Esophagus muscularis mucosa (tissue), 4 donors: ENCODE measurements at regions of chr6 and their contacts with region 1.

Region 1: DNA sequence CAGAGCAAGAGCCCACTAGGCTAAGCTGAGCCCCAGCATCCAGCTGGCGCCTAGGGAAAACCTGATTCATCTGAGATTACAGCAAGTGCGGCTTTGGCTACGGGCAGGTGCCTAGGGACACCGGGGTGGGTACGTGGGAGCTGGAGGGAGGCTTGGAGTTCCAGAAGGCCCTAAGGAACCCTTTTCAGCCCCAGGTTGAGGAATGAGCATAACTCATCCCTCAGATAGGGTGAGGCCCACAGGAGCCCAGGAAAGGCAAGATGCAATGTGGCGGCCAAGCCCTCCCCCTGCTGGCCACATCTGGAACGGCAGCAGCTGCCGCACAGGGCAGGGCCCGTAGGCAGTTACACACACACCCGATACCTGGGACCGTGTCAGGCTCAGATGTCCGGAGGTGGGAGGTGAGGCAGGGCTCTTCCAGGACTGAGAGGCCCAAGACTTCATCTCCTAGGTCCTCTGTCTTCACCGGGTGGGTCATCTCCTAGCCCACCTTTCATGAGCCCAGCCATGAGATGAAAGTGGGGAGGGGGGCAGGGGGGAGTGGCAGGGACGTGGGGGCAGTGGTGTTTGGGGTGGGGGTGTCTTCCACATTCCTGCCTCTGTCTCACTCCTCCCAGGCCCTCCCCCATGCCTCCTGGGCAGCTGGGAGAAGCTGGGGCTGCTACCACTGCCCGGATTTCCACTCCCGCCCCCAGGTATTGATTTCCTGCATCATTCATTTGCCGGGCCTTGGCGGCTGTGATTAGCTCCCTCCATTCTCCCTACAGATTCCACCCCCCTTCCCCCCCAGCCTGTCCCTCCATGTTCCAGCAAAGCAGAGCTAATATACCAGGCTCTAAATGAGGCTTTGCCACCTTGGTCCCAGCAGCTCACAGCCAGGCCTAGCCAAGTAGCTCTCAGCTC is 5.5 kb downstream of the MDGA1 start:
- DNase-seq: peak; percentile 94
- H3K4me3 ChIP-seq: no peak overlapping the region
- H3K27ac ChIP-seq: no peak overlapping the region
- H3K4me1 ChIP-seq: peaks cover 11 to 33% (median 25%) of the 10 kb centered on the region in 4 donors
- H3K27me3 ChIP-seq: peaks cover 0 to 17% (median 0%) of the 10 kb centered on the region in 4 donors
- CTCF ChIP-seq: peak; percentile 88 to 100 (median 93)
- EP300 ChIP-seq: no peak
- POLR2A ChIP-seq: no peak

Region 2: GRCh38 chr6:37324131-37325033 is 367.8 kb before region 1 on chr6:
- intact Hi-C with region 1: loop called (anchors 5 kb)
- DNase-seq: no peak
- H3K4me3 ChIP-seq: no peak overlapping the region
- H3K27ac ChIP-seq: no peak overlapping the region
- H3K4me1 ChIP-seq: peaks cover 0 to 18% (median 12%) of the 10 kb centered on the region in 4 donors
- H3K27me3 ChIP-seq: no peaks in the 10 kb centered on the region
- CTCF ChIP-seq: no peak
- EP300 ChIP-seq: no peak
- POLR2A ChIP-seq: no peak

Region 3: DNA sequence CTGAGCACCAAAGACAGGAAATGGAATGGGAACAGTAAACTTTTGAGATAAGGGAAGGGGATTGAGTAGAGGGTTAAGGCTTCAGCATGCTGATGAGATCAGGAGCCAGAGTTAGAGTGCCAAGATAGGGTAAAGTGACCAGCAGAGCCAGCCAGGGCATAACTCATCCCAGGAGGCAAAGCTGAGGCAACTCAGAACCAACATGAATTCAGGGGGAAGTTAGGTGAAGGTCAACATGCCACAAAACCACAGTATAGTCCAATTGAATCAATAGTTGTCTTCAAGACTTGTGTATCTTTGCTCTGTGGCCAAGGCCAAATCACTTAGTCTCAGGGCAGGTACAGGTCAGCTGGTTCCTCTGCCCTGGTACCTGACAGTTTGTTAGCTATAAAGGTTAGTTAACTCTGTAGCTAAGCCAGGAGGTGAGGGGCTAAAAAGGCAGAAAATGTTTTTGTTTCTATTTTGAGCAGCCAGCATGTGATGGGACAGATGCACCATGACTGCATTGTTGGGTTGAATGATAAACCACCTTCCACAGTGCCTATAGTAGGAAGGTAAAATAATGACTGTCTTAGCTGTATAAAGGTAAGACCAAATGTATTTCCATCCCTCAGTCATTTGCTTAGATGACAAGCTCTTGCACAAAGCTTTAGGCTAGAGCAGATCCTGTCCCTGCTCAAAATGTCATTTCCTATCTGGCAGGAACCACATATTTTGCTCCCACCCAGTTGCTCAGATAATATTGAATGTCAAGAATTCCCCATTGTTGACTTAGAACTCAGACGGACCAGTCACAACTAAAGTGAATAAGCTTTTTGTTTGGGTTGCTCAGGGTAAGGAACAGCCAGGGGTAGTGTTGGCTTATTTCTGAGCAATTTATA is 322.6 kb before region 1 on chr6:
- intact Hi-C with region 1: loop called (anchors 10 kb)
- DNase-seq: no peak
- H3K4me3 ChIP-seq: no peak overlapping the region
- H3K27ac ChIP-seq: no peak overlapping the region
- H3K4me1 ChIP-seq: peaks cover 5 to 25% (median 15%) of the 10 kb centered on the region in 4 donors
- H3K27me3 ChIP-seq: no peaks in the 10 kb centered on the region
- CTCF ChIP-seq: no peak
- EP300 ChIP-seq: no peak
- POLR2A ChIP-seq: no peak

Region 4: GRCh38 chr6:37483917-37484785 is 208.0 kb before region 1 on chr6:
- intact Hi-C with region 1: loop called (anchors 2 kb)
- DNase-seq: no peak
- H3K4me3 ChIP-seq: no peak overlapping the region
- H3K27ac ChIP-seq: no peak overlapping the region
- H3K4me1 ChIP-seq: peaks cover 0 to 17% (median 7%) of the 10 kb centered on the region in 4 donors
- H3K27me3 ChIP-seq: no peaks in the 10 kb centered on the region
- CTCF ChIP-seq: peak; percentile 64 to 81 (median 74)
- EP300 ChIP-seq: no peak
- POLR2A ChIP-seq: no peak

Region 5: DNA sequence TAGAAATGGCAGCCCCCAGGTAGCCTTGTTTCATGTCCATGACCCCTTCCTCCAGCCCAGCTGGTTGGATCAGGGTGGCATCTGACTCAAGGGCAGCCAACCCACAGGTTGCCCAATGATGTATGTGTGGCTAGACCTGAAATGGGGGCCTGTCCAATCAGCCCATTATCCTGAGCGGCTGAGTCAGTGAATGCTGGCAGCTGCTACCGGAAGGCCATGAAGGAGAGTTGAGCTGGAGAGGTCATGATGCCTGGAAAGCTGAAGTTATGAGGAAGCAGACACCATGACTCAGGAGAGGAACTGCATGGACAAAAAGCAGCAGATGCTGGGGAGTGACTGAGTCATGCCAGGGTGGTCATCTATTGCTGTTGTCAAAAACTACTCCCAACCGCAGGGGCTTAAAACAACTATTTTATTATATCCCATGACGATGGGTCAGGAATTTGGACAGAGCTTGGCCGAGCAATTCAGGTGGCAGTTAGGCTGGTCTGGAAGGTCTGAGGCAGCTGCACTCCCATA is 61.8 kb before region 1 on chr6:
- intact Hi-C with region 1: no loop called
- DNase-seq: no peak
- H3K4me3 ChIP-seq: no peak overlapping the region
- H3K27ac ChIP-seq: no peak overlapping the region
- H3K4me1 ChIP-seq: peaks cover under 1 to 4% (median 3%) of the 10 kb centered on the region in 4 donors
- H3K27me3 ChIP-seq: peaks cover 0 to 23% (median 3%) of the 10 kb centered on the region in 4 donors
- CTCF ChIP-seq: no peak
- EP300 ChIP-seq: no peak
- POLR2A ChIP-seq: no peak